PC-9 (cell line): ENCODE measurements at regions of chr2 and their contacts with region 1.

Region 1: GRCh38 chr2:98586551-98587140 is 21.7 kb downstream of the COA5 start:
- DNase-seq: no peak
- H3K4me3 ChIP-seq: no peak overlapping the region
- H3K27ac ChIP-seq: no peak overlapping the region
- H3K4me1 ChIP-seq: no peaks in the 10 kb centered on the region
- H3K27me3 ChIP-seq: no peaks in the 10 kb centered on the region
- CTCF ChIP-seq: no peak

Region 2: DNA sequence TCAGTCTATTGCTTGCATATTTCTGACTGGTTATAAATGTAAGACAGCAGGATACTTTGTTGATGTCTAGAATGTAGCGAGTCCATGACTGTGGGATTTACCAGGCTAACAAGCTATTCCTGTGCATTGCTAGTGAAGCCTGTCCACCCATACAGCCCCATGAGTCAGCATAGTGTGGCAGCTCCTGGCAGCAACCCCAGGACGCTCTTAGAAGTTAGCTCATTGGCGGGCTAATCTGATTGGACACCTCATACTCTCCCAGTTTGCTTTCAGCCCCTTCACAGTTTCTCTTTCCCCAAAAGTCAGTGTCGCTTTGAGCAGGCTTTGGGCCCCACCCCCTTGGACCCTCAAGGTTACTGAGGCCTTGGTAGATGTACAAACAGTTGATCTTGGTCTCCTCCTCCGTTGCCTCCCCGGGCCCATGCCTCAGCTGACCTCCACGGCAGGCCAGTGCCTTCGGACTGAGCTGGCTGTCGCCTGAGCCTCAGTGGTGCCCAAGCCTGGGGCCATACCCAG is 26.3 kb before region 1 on chr2:
- CTCF ChIA-PET with region 1: no interaction called
- POLR2A ChIA-PET with region 1: no interaction called
- intact Hi-C with region 1: loop called (anchors 1 kb)
- DNase-seq: peak in 1 of 2 experiments; percentile 58
- H3K4me3 ChIP-seq: no peak overlapping the region
- H3K27ac ChIP-seq: no peak overlapping the region
- H3K4me1 ChIP-seq: no peaks in the 10 kb centered on the region
- H3K27me3 ChIP-seq: no peaks in the 10 kb centered on the region
- CTCF ChIP-seq: no peak

Region 3: DNA sequence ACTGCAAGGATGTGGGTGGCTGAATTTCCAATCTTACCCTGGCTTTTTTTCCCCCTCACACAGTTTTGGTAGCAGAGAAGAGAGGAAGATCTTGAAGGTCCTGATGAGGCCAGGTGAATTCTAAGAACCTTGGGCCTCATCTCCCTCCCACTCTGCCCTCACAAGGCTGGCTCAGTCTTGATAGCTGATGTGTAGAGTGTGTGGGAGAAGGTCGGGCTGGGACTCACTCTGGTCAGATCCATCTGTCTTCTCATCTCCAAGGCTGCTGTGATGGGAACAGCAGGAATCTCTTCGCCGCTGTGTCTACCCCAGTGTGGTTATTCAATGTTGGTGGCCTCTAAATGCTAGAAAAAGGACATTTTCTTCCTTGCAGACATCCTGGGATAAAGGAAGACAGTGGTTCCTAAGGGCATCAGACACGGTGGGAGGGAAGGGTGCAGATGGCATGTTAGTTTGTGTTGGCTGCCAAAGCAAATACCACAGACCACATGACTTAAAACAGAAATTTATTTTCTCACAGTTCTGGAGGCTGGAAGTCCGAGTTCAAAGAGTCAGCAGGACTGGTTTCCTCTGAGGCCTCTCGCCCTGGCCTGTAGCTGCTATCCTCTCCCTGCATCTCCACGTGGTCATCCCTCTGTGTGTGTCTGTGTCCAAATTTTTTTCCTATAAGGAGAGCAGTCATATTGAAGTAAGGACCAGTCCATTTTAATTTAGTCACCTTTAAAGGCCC is 181.9 kb after region 1 on chr2:
- CTCF ChIA-PET with region 1: no interaction called
- POLR2A ChIA-PET with region 1: no interaction called
- intact Hi-C with region 1: no loop called
- DNase-seq: peak; percentile 32 to 76
- H3K4me3 ChIP-seq: no peak overlapping the region
- H3K27ac ChIP-seq: no peak overlapping the region
- H3K4me1 ChIP-seq: peaks cover 34% of the 10 kb centered on the region
- H3K27me3 ChIP-seq: no peaks in the 10 kb centered on the region
- CTCF ChIP-seq: no peak